Activated CD4-positive, alpha-beta memory T cell treated with anti-CD3 and anti-CD28 coated beads, Interleukin-2, amount 10 ng/mL, durations not matched to agents 7 days and 5 days (primary cell): ENCODE measurements at regions of chr3 and their contacts with region 1.

Region 1: GRCh38 chr3:141412087-141412935 is 44.0 kb downstream of the ZBTB38 start:
- DNase-seq: peak; percentile 69
- H3K4me3 Mint-ChIP-seq: peak overlapping the region; percentile 78
- H3K27ac Mint-ChIP-seq: peak overlapping the region; percentile 99
- H3K4me1 Mint-ChIP-seq: peaks cover 72% of the 10 kb centered on the region
- H3K27me3 Mint-ChIP-seq: no peaks in the 10 kb centered on the region

Region 2: GRCh38 chr3:141311496-141312353 is 100.6 kb before region 1 on chr3:
- CTCF ChIA-PET with region 1: interaction called, 11 read pairs
- POLR2A ChIA-PET with region 1: interaction called, 10 read pairs
- DNase-seq: peak; percentile 99
- H3K4me3 Mint-ChIP-seq: peak overlapping the region; percentile 93
- H3K27ac Mint-ChIP-seq: peak overlapping the region; percentile 86
- H3K4me1 Mint-ChIP-seq: peaks cover 58% of the 10 kb centered on the region
- H3K27me3 Mint-ChIP-seq: no peaks in the 10 kb centered on the region

Region 3: DNA sequence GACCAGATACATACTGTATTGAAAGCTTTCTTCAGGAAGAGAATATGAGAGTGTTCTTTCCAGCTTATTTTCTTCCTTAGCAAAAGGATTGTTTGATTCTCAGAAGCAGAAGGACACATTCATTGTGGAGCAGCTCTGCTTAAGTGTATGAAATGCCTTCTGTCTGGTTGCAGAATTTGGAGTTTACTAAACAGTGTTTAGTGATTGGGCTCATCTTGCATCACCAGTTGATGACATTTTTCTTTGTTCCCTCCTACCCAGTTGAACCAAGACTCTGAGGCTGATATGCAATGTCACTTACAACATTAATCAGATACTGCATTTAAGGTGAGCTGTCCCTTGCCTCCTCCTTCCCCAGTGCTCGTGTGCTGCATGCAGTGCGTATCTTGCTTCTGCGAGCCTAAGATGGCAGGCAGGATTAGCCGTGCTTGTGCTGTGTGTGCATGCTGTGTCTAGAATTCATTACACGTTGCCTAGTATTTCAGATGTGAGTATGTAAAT is 25.6 kb before region 1 on chr3:
- CTCF ChIA-PET with region 1: interaction called, 10 read pairs
- POLR2A ChIA-PET with region 1: interaction called, 320 read pairs
- DNase-seq: no peak
- H3K4me3 Mint-ChIP-seq: peak overlapping the region; percentile 63
- H3K27ac Mint-ChIP-seq: peak overlapping the region; percentile 65
- H3K4me1 Mint-ChIP-seq: peaks cover 37% of the 10 kb centered on the region
- H3K27me3 Mint-ChIP-seq: no peaks in the 10 kb centered on the region

Region 4: GRCh38 chr3:141425523-141426233 is 13.4 kb after region 1 on chr3:
- CTCF ChIA-PET with region 1: no interaction called
- POLR2A ChIA-PET with region 1: interaction called, 11 read pairs
- DNase-seq: no peak
- H3K4me3 Mint-ChIP-seq: no peak overlapping the region
- H3K27ac Mint-ChIP-seq: no peak overlapping the region
- H3K4me1 Mint-ChIP-seq: peaks cover 20% of the 10 kb centered on the region
- H3K27me3 Mint-ChIP-seq: no peaks in the 10 kb centered on the region